ENCODE measurements at regions of chr15 and their contacts with region 1.

Region 1: GRCh38 chr15:40108855-40109735 is at the start of gene BMF:
- DNase-seq: peak; percentile 96
- H3K4me3 Mint-ChIP-seq: peak within 1 kb of the TSS; percentile 75
- H3K27ac Mint-ChIP-seq: peak within 1 kb of the TSS; percentile 41
- H3K4me1 Mint-ChIP-seq: peaks cover 33% of the 10 kb centered on the region
- H3K27me3 Mint-ChIP-seq: no peaks in the 10 kb centered on the region
- CTCF ChIP-seq: no peak
- total RNA-seq, gene BMF: 7.9 and 11.5 TPM in 2 replicates

Region 2: GRCh38 chr15:40029979-40030893 is 78.9 kb before region 1 on chr15:
- CTCF ChIA-PET with region 1: no interaction called
- intact Hi-C with region 1: no loop called
- DNase-seq: no peak
- H3K4me3 Mint-ChIP-seq: no peak overlapping the region
- H3K27ac Mint-ChIP-seq: no peak overlapping the region
- H3K4me1 Mint-ChIP-seq: no peaks in the 10 kb centered on the region
- H3K27me3 Mint-ChIP-seq: no peaks in the 10 kb centered on the region
- CTCF ChIP-seq: no peak

Region 3: GRCh38 chr15:40044717-40045571 is 64.2 kb before region 1 on chr15:
- CTCF ChIA-PET with region 1: interaction called, 75 read pairs
- intact Hi-C with region 1: loop called (anchors 1 kb)
- DNase-seq: peak; percentile 82
- H3K4me3 Mint-ChIP-seq: no peak overlapping the region
- H3K27ac Mint-ChIP-seq: no peak overlapping the region
- H3K4me1 Mint-ChIP-seq: peaks cover 10% of the 10 kb centered on the region
- H3K27me3 Mint-ChIP-seq: no peaks in the 10 kb centered on the region
- CTCF ChIP-seq: no peak

Region 4: GRCh38 chr15:40069178-40070165 is 39.6 kb before region 1 on chr15:
- CTCF ChIA-PET with region 1: no interaction called
- intact Hi-C with region 1: loop called (anchors 5 kb)
- DNase-seq: peak; percentile 96
- H3K4me3 Mint-ChIP-seq: no peak overlapping the region
- H3K27ac Mint-ChIP-seq: no peak overlapping the region
- H3K4me1 Mint-ChIP-seq: peaks cover 7% of the 10 kb centered on the region
- H3K27me3 Mint-ChIP-seq: no peaks in the 10 kb centered on the region
- CTCF ChIP-seq: no peak

Region 5: GRCh38 chr15:40160689-40161688 is 51.9 kb after region 1 on chr15 and contains the start of gene BUB1B:
- CTCF ChIA-PET with region 1: interaction called, 7 read pairs
- intact Hi-C with region 1: loop called (anchors 5 kb)
- DNase-seq: peak; percentile 86
- H3K4me3 Mint-ChIP-seq: no peak within 1 kb of the TSS
- H3K27ac Mint-ChIP-seq: no peak within 1 kb of the TSS
- H3K4me1 Mint-ChIP-seq: peaks cover 2% of the 10 kb centered on the region
- H3K27me3 Mint-ChIP-seq: no peaks in the 10 kb centered on the region
- CTCF ChIP-seq: no peak
- total RNA-seq, gene BUB1B: 39.0 and 41.8 TPM in 2 replicates